ENCODE measurements at regions of chr7 and their contacts with region 1.

Region 1: DNA sequence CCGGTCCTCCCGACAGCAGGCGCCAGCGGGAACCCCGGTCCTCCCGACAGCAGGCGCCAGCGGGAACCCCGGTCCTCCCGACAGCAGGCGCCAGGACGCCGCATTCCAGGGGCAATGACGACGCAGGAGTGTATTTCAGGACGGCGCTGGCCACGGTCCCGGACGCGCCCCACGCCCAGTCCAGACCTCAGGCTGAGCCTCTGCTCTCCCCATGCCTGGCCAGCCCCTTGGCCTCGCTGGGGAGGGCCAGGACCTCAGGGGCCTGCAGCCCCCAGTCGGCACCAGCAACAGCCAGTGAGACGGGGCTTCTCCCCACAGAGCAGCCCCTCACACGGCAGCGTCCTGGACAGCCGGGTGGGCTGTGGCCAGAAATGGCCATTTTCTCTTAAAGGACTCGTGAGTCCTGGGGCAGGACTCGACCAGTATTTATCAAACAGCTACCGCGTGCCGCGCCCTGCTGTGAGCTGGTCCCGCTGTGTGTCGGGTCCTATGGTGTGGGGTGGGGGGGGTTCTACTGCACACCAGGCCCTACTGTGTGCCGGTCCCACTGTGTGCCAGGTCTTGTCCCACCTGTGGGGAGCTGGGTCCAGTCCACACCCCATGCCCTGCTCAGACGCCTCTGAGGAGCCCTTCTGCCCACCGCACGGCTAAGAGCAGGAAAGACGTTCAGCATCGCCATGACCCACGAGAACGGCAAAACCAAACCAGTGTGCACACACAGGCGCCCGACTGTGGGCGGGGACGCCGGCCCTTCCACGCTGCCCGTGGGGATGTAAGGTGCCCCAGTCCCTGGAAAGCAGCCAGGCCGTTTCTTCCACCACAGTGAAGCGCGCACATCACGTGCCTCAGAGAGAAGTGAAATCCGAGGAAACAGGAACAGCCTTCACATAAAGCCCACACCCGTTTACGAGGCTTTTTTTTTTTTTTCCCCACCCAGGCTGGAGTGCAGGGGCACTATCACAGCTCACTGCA is 33.3 kb downstream of the GET4 start:
- DNase-seq: peak; percentile 42 to 50
- ATAC-seq: peak; percentile 36 to 69
- H3K4me3 ChIP-seq: peak overlapping the region; percentile 42
- H3K27ac ChIP-seq: peak overlapping the region; percentile 54 to 80; a peak in 5 of 6 replicates
- H3K4me1 ChIP-seq: peaks cover 15% of the 10 kb centered on the region
- CTCF ChIP-seq: no peak; the same call in 1 of the 3 replicates
- EP300 ChIP-seq: no peak
- POLR2A ChIP-seq: no peak
- RAD21 ChIP-seq: no peak

Region 2: GRCh38 chr7:954330-955238 is 44.9 kb after region 1 on chr7 and contains the start of gene ADAP1:
- CTCF ChIA-PET with region 1: interaction called, 40 read pairs
- POLR2A ChIA-PET with region 1: no interaction called
- DNase-seq: peak; percentile 37 to 54
- ATAC-seq: peak; percentile 54 to 71
- H3K4me3 ChIP-seq: peak within 1 kb of the TSS; percentile 64
- H3K27ac ChIP-seq: peak within 1 kb of the TSS; percentile 61 to 88
- H3K4me1 ChIP-seq: peaks cover 3% of the 10 kb centered on the region; the same call in 1 of the 3 replicates
- CTCF ChIP-seq: peak; percentile 60
- EP300 ChIP-seq: no peak
- POLR2A ChIP-seq: no peak
- RAD21 ChIP-seq: peak in 1 of 2 experiments; percentile 18; a peak in 3 of 5 replicates
- polyA plus RNA-seq, gene ADAP1: 1.7 and 2.2 TPM in 2 replicates

Region 3: GRCh38 chr7:974820-975681 is 65.4 kb after region 1 on chr7 and contains the start of gene COX19:
- CTCF ChIA-PET with region 1: interaction called, 17 read pairs
- POLR2A ChIA-PET with region 1: no interaction called
- DNase-seq: peak; percentile 68 to 92
- ATAC-seq: peak; percentile 86 to 93
- H3K4me3 ChIP-seq: peak within 1 kb of the TSS; percentile 77
- H3K27ac ChIP-seq: peak within 1 kb of the TSS; percentile 81 to 96
- H3K4me1 ChIP-seq: peaks cover 24% of the 10 kb centered on the region
- CTCF ChIP-seq: no peak
- EP300 ChIP-seq: no peak
- POLR2A ChIP-seq: peak; percentile 68
- RAD21 ChIP-seq: no peak
- polyA plus RNA-seq, gene COX19: 5.4 and 7.6 TPM in 2 replicates

Region 4: GRCh38 chr7:1503816-1504775 is 594.5 kb after region 1 on chr7 and contains the start of gene INTS1:
- CTCF ChIA-PET with region 1: no interaction called
- POLR2A ChIA-PET with region 1: no interaction called
- DNase-seq: peak; percentile 85 to 95
- ATAC-seq: peak; percentile 86 to 87
- H3K4me3 ChIP-seq: peak within 1 kb of the TSS; percentile 93
- H3K27ac ChIP-seq: peak within 1 kb of the TSS; percentile 87 to 98
- H3K4me1 ChIP-seq: peaks cover 51% of the 10 kb centered on the region
- CTCF ChIP-seq: peak; percentile 86
- EP300 ChIP-seq: peak in 1 of 2 experiments; percentile 16; a peak in 1 of 5 replicates
- POLR2A ChIP-seq: peak; percentile 9
- RAD21 ChIP-seq: peak; percentile 33 to 73; a peak in 4 of 5 replicates
- polyA plus RNA-seq, gene INTS1: 14.6 and 18.4 TPM in 2 replicates